Sigmoid colon (tissue), 7 donors: ENCODE measurements at regions of chr9 and their contacts with region 1.

Region 1: DNA sequence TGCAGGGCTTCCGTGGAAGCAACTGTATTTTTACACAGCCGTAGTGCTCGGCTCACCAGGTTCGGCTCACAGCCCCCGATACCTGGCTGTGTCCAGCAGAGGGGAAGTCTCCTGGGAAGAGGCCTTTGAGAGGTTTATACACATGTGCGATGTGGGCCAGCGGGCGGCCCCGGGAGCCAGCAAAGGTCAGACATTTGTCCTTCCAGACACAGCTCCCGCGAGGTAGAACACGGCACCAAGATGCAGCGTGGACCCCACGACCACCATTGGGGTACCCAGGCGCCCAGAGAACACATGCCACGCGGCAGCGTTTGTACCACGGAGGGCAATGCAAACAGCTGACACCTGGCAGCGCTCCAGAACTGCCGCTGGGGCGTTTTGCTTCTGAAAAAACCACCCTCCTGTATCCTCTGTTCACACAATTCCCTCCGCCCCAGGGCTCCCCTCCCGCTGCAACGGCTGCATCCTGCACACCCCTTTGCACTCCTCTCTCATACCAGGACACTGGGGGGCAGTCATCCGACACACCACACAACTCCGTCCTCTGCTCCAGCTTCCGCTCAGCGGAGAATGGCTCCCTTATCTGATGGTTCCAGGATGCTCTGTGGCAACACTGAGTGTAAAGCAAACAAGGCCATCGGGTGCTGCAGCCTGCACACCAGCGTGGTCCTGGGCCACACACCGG is 235.3 kb downstream of the SYK start:
- DNase-seq: peak; percentile 93
- H3K4me3 ChIP-seq: no peak overlapping the region
- H3K27ac ChIP-seq: peak overlapping the region; percentile 23 to 67 (median 60)
- H3K4me1 ChIP-seq: peaks cover 0 to 20% (median 19%) of the 10 kb centered on the region in 4 donors
- H3K27me3 ChIP-seq: no peaks in the 10 kb centered on the region
- CTCF ChIP-seq: peak; percentile 55 to 80 (median 60)
- EP300 ChIP-seq: no peak
- POLR2A ChIP-seq: no peak

Region 2: DNA sequence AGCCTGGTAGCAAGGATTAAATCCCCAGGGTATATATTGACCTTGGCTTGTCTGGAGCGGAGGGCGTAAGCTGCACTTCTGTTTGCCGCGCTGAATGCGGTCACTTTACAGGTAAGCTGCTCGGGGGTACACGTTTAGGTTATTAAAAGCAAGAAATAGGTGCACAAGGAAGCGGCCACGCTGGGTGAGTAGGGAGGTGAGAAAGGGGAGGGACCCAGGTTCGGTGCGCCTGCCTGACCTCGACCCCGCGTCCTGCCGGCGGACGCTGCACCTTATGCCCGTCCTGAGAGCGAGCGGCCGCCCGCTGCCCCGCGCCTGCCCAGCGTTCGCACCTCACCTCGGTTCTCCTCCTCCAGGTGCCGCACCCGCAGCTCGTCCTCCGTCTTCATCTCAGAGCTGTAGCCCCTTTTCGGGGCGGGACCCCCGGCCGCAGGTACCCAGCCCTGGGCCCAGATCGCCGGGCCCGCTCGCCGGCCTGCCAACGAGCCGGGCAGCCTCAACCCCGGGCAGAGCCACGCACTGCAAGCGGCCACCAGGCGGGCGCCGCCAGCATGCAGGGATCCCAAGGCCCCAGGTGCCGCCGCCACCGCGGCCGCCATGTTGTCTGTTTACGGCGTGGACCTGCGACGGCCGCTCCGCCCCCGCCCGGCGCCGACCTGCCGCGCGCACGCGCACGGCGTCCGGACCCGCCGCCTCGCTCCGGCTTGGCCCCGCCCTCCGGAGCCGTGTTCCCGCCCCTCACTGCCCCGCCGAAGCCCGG is 324.5 kb after region 1 on chr9 and contains the start of gene AUH:
- intact Hi-C with region 1: loop called (anchors 5 kb)
- DNase-seq: peak; percentile 92
- H3K4me3 ChIP-seq: peak within 1 kb of the TSS; percentile 75 to 99 (median 98)
- H3K27ac ChIP-seq: peak within 1 kb of the TSS; percentile 89 to 90 (median 90)
- H3K4me1 ChIP-seq: peaks cover 0 to 36% (median 18%) of the 10 kb centered on the region in 4 donors
- H3K27me3 ChIP-seq: no peaks in the 10 kb centered on the region
- CTCF ChIP-seq: peak in 1 of 4 experiments; percentile 9
- EP300 ChIP-seq: no peak
- POLR2A ChIP-seq: no peak
- total RNA-seq, gene AUH: 27.1 to 36.4 (median 28.1) TPM

Region 3: DNA sequence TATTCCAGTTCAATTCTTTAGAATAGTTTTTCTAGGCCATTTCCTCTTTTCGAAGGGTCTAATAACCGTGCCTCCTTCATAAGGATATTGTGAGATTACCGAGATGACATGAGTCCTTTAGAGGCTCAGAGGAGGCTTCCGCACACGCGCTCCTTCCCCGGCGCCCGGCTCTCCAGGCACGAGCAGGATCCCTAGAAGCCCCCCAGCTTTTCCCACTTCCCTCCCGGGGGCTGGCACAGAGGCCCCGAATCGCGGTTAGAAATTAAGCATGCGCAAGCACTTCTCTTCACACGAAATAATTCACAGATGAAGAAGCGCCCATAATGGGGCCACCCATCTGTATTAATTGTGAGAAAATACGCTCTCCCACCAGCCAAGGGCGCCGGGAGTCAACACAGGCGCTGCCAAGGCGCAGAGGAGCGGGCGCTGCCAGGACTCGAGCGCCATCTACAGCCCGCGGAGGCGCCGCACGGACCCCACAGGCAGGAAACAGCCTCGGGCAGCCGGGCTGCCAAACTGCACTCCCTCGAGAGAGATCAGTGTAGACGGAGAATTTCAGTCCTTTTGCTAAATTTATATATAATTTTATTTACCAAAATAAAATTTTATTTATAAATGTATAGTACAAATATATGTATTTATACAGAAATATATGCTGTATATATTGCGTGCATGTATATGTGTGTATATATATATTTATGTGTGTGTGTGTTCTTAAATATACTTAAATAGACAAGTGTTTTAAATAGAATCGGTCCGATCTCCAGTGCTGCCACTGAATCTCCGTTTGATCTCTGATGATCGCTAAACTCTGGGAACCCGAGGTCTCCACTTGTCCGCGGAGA is 644.7 kb after region 1 on chr9:
- intact Hi-C with region 1: loop called (anchors 1 kb)
- DNase-seq: peak; percentile 88
- H3K4me3 ChIP-seq: peak overlapping the region in 2 of 4 donors; percentile 21 to 22
- H3K27ac ChIP-seq: no peak overlapping the region
- H3K4me1 ChIP-seq: peaks cover 0 to 8% (median 4%) of the 10 kb centered on the region in 4 donors
- H3K27me3 ChIP-seq: no peaks in the 10 kb centered on the region
- CTCF ChIP-seq: peak; percentile 51 to 88 (median 76)
- EP300 ChIP-seq: no peak
- POLR2A ChIP-seq: no peak